Pancreas (tissue), 10 donors: ENCODE measurements at regions of chr10 and their contacts with region 1.

Region 1: GRCh38 chr10:103238506-103239252 is 7.0 kb upstream of the RPEL1 start:
- DNase-seq: no peak
- ATAC-seq: peak in 2 of 4 donors; percentile 15 to 27
- H3K4me3 ChIP-seq: no peak overlapping the region
- H3K27ac ChIP-seq: no peak overlapping the region
- H3K4me1 ChIP-seq: peaks cover 0 to 13% (median 10%) of the 10 kb centered on the region in 3 donors
- H3K27me3 ChIP-seq: no peaks in the 10 kb centered on the region
- CTCF ChIP-seq: no peak

Region 2: GRCh38 chr10:102408728-102409603 is 829.7 kb before region 1 on chr10:
- intact Hi-C with region 1: no loop called
- DNase-seq: peak in 3 of 6 donors; percentile 48 to 73 (median 69)
- ATAC-seq: peak in 3 of 4 donors; percentile 55 to 70 (median 56)
- H3K4me3 ChIP-seq: peak overlapping the region in 2 of 4 donors; percentile 20 to 41
- H3K27ac ChIP-seq: no peak overlapping the region
- H3K4me1 ChIP-seq: no peaks in the 10 kb centered on the region
- H3K27me3 ChIP-seq: peaks cover 0 to 20% (median 2%) of the 10 kb centered on the region in 4 donors
- CTCF ChIP-seq: no peak

Region 3: DNA sequence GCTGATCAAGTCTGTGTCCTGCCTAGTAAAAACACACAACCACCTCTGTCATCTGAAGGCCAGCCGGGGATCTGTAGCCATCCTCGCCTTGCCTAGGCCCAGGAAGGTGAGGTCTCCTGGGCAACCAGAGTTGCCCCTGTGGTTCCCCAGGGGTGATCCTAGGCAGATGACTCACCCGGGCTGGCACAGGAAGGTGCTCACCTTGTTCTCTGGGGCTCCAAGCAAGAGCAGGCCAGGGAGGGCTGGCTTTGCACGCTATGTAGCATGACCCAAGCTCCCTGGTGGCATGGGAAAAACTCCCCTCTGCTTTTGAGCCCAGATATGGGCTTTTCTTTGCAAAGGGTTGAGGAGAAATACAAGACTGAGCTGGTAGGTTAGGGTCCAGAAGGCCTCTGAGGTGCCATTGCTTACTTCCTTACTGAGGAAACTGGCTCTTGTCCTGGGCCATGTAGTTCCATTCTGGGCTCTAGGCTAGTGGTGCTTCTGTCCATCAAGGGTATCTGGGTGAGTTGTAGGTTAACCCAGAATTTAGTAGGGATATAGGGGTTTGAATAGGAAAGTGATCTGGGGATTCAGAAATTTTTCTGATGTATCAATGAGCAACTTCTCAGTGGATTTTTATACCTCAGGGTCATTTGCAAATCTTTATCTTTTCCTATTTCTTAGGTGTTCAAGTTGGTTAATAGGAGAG is 157.6 kb before region 1 on chr10:
- intact Hi-C with region 1: loop called in 1 of 3 experiments (anchors 10 kb)
- DNase-seq: no peak
- ATAC-seq: no peak
- H3K4me3 ChIP-seq: no peak overlapping the region
- H3K27ac ChIP-seq: no peak overlapping the region
- H3K4me1 ChIP-seq: no peaks in the 10 kb centered on the region
- H3K27me3 ChIP-seq: no peaks in the 10 kb centered on the region
- CTCF ChIP-seq: no peak